Ovary (tissue), 10 donors: ENCODE measurements at regions of chr19 and their contacts with region 1.

Region 1: GRCh38 chr19:35716801-35717666 is 769 bp upstream of the KMT2B start:
- DNase-seq: peak; percentile 79 to 95 (median 88)
- H3K4me3 ChIP-seq: peak overlapping the region; percentile 84
- H3K27ac ChIP-seq: peak overlapping the region; percentile 85 to 96
- H3K4me1 ChIP-seq: peaks cover 10% of the 10 kb centered on the region
- H3K27me3 ChIP-seq: no peaks in the 10 kb centered on the region
- CTCF ChIP-seq: peak; percentile 77 to 93 (median 86)
- EP300 ChIP-seq: no peak
- POLR2A ChIP-seq: no peak

Region 2: GRCh38 chr19:35430409-35431144 is 286.5 kb before region 1 on chr19:
- intact Hi-C with region 1: no loop called
- DNase-seq: no peak
- H3K4me3 ChIP-seq: no peak overlapping the region
- H3K27ac ChIP-seq: no peak overlapping the region
- H3K4me1 ChIP-seq: peaks cover 8% of the 10 kb centered on the region
- H3K27me3 ChIP-seq: no peaks in the 10 kb centered on the region
- CTCF ChIP-seq: no peak
- EP300 ChIP-seq: no peak
- POLR2A ChIP-seq: no peak

Region 3: DNA sequence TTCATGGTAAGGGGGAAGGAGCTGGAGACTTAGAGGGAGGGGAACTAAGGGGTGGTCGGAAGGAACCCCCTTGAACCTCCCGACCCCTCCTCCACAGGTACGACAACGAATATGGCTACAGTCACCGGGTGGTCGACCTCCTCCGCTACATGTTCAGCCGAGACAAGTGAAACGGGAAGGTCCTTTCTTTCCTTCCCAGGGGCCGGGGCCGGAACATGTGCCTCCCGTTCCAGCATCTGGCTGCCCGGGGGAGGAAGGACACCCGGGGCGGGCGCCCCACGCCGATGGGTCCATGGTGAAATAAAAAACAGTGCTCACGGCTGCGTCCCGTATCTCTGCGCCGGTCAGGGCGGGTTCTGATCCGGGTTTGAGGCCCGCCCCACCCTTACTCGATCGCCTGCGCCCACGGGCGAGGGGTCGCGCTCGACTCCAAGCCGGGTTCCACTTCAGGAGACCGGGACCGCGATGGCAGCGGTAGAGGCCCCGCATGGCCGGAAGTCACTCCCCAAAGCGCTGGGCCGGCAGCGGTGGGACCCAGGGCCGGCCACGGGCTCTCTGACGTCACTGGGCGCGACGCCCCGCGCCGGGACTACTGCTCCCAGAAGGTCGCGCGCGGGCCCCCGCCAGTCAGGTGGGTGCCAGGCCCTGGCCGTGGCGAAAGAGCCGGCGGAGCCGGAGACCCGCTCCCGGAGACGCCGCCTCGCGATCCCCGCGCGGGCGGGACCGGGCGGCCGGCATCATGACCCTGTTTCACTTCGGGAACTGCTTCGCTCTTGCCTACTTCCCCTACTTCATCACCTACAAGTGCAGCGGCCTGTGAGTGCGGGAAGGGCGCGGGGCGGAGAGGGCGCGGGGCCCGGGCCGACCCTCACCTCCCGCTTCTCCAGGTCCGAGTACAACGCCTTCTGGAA is 171.8 kb before region 1 on chr19 and contains the start of gene TMEM147:
- intact Hi-C with region 1: loop called in 2 of 4 experiments (anchors 5 kb)
- DNase-seq: peak; percentile 93 to 96 (median 95)
- H3K4me3 ChIP-seq: peak within 1 kb of the TSS; percentile 72
- H3K27ac ChIP-seq: peak within 1 kb of the TSS; percentile 44 to 53
- H3K4me1 ChIP-seq: peaks cover 10% of the 10 kb centered on the region
- H3K27me3 ChIP-seq: no peaks in the 10 kb centered on the region
- CTCF ChIP-seq: no peak
- EP300 ChIP-seq: no peak
- POLR2A ChIP-seq: peak; percentile 58
- total RNA-seq, gene TMEM147: 61.4 to 87.7 (median 66.8) TPM

Region 4: GRCh38 chr19:35657904-35658700 is 58.9 kb before region 1 on chr19:
- intact Hi-C with region 1: no loop called
- DNase-seq: no peak
- H3K4me3 ChIP-seq: no peak overlapping the region
- H3K27ac ChIP-seq: no peak overlapping the region
- H3K4me1 ChIP-seq: no peaks in the 10 kb centered on the region
- H3K27me3 ChIP-seq: no peaks in the 10 kb centered on the region
- CTCF ChIP-seq: no peak
- EP300 ChIP-seq: no peak
- POLR2A ChIP-seq: no peak

Region 5: GRCh38 chr19:35693830-35694599 is 23.0 kb before region 1 on chr19:
- intact Hi-C with region 1: loop called in 2 of 4 experiments (anchors 2 kb)
- DNase-seq: peak; percentile 77 to 88 (median 86)
- H3K4me3 ChIP-seq: no peak overlapping the region
- H3K27ac ChIP-seq: no peak overlapping the region
- H3K4me1 ChIP-seq: no peaks in the 10 kb centered on the region
- H3K27me3 ChIP-seq: no peaks in the 10 kb centered on the region
- CTCF ChIP-seq: peak; percentile 88 to 97 (median 96)
- EP300 ChIP-seq: no peak
- POLR2A ChIP-seq: no peak

Region 6: DNA sequence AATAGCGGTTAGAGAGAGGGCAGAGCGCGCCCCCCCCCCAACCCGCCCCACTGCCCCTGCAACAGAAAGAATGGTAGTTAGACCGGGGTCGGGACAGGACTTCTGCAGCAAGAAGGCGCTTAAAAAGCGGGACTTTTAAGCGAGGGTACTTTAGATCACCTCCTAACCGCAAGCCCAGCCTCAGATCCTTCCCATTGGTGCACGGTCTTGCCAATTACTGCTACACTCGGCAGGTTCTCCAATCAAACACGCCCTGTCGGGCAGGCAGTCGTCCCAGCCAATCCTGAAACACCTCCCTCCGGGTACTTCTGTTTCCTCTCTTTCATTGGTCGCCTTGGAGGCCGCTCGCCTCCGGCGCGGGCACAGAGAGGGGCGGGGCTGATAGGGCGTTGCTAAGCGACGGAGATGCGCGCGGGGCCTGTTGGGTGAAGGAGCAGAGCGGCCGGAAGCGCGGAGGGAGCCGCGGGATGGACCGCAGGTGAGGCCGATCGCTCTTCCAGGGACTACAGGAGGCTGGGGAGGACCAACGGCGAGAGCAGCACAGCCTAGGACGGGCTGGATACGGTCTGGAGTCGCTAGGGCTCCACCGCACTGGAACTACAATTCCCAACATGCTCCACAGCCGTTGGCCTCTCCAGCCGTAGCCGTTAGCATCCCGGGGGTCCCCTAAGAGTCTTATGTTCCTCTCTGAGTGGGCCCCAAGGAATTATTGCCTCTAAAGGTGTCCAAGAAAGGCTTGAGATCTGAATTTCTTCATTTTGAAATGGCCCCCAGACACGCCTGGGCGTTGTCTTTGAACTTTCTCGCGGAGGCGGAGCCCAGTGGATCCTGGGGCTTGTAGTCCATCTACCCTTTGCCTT is 40.9 kb after region 1 on chr19 and contains the start of gene PROSER3:
- intact Hi-C with region 1: loop called in 1 of 4 experiments (anchors 2 kb)
- DNase-seq: peak; percentile 97 to 99 (median 98)
- H3K4me3 ChIP-seq: peak within 1 kb of the TSS; percentile 91
- H3K27ac ChIP-seq: peak within 1 kb of the TSS; percentile 93 to 97
- H3K4me1 ChIP-seq: peaks cover 12% of the 10 kb centered on the region
- H3K27me3 ChIP-seq: no peaks in the 10 kb centered on the region
- CTCF ChIP-seq: no peak
- EP300 ChIP-seq: no peak
- POLR2A ChIP-seq: peak; percentile 89
- total RNA-seq, gene PROSER3: 3.3 to 59.0 (median 32.0) TPM

Region 7: DNA sequence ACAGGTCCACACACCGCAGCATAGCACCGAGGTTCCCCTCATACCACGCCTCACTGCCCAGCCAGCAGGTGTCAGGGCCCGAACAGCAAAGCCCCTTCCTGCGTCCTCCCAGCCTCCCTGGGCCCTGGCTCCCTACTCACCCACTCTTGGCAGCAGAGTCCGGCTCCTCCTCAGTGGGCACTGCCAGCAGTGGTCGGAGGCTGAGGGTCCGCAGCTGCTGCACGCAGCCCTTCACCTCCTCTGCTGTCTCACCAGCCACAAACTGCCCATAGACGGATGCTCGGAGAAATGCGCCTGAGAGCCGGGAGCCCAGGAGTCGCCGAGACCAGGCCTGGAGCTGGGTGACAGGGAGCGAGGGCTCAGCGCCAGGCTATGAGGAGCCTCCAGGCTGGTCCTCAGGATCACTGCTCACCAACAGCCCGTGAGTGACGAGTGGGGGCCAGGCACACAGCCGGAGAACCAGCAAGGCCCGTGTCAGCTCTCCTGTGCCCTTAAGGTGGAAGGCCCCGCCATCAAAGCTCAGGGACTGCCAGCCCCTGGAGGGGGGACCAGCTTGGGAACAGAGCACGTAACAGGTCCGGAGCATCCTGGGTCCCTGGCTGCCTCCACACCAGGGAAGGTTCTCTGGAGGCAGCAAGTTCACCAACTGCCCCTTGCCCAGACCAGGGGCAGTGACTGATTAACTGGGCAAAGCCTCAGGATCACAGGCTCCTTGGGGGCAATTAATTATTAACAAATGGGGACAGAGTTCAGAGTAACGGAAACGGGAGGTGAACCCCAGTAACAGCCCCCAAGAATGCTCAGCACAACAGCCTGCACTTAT is 95.4 kb after region 1 on chr19 and contains the start of gene PRODH2:
- intact Hi-C with region 1: loop called in 1 of 4 experiments (anchors 10 kb)
- DNase-seq: no peak
- H3K4me3 ChIP-seq: no peak within 1 kb of the TSS
- H3K27ac ChIP-seq: no peak within 1 kb of the TSS
- H3K4me1 ChIP-seq: no peaks in the 10 kb centered on the region
- H3K27me3 ChIP-seq: no peaks in the 10 kb centered on the region
- CTCF ChIP-seq: no peak
- EP300 ChIP-seq: no peak
- POLR2A ChIP-seq: no peak
- total RNA-seq, gene PRODH2: 0.41 TPM in 1 of 7 donors, not detected in the others

Region 8: DNA sequence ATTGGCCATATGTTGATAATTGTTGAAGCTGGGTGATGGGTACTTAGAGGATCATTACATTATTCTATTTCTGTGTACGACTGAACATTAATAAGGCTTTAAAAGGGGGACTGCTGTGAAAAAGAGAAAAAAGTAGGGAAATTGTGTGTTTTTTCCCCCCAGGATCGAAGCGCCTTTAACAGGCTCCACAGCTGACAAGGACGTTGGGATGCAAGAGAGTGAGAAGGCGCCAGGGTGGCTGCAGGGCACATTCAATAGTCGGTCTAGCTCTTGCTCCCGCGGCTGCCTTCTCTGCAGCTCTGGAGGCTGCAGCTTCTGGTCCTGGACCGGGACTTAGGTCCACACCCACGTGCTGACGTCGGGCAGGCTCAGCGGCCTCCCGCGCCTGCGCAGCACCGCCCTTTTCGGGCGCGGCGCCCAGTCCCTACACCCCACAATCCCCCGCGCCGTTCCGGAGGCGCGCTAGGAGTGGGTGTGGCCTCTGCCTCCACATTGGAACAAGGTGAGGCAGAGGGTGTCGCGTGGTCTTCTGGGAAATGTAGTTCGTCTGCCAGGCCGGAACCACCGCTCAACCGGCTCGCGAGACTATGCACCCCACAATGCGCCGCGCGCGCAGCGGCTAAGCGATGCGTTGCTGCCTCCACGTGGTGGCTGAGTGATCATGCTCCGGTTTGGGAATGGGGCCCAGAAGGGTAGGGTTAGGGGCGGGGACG is 214.3 kb after region 1 on chr19:
- intact Hi-C with region 1: no loop called
- DNase-seq: peak; percentile 99
- H3K4me3 ChIP-seq: no peak overlapping the region
- H3K27ac ChIP-seq: peak overlapping the region; percentile 29 to 66
- H3K4me1 ChIP-seq: peaks cover 1% of the 10 kb centered on the region
- H3K27me3 ChIP-seq: no peaks in the 10 kb centered on the region
- CTCF ChIP-seq: peak; percentile 73 to 98 (median 97)
- EP300 ChIP-seq: no peak
- POLR2A ChIP-seq: peak; percentile 50

Region 9: DNA sequence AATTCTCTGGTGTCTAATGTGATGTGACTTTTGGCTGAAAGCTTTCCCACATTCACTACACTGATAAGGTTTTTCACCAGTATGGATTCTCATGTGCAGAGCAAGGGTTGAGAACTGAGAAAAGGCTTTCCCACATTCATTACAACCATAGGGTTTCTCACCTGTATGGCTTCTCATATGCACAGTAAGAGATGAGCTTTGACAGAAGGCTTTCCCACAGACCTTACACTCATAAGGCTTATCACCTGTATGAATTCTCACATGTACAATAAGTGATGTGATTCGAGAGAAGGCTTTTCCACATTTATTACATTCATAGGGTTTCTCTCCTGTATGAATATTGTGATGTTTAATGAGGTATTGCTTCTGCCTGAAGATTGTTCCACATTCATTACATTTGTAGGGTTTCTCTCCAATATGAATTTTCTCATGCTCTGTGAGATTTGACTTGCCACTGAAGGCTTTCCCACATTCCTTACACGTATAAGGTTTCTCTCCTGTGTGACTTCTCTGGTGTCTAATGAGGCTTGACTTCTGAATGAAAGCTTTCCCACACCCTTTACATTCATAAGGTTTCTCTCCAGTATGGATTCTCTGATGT is 797.1 kb after region 1 on chr19:
- intact Hi-C with region 1: no loop called
- DNase-seq: no peak
- H3K4me3 ChIP-seq: no peak overlapping the region
- H3K27ac ChIP-seq: no peak overlapping the region
- H3K4me1 ChIP-seq: no peaks in the 10 kb centered on the region
- H3K27me3 ChIP-seq: no peaks in the 10 kb centered on the region
- CTCF ChIP-seq: no peak
- EP300 ChIP-seq: no peak
- POLR2A ChIP-seq: no peak